HepG2 (cell line): ENCODE measurements at regions of chr19 and their contacts with region 1.

Region 1: GRCh38 chr19:49850473-49851342 is at the start of gene PTOV1:
- DNase-seq: peak; percentile 90
- ATAC-seq: peak; percentile 84
- H3K4me3 ChIP-seq: peak within 1 kb of the TSS; percentile 89 to 93 (median 90)
- H3K27ac ChIP-seq: peak within 1 kb of the TSS; percentile 100
- H3K4me1 ChIP-seq: peaks cover 30% of the 10 kb centered on the region
- H3K27me3 ChIP-seq: no peaks in the 10 kb centered on the region; a peak in 1 of 5 replicates
- CTCF ChIP-seq: peak; percentile 20; the same call in 1 of the 2 replicates
- EP300 ChIP-seq: 0 out of 4 replicates have a peak, but pooled peaks of 1 of the 2 experiments have one; percentile 35
- POLR2A ChIP-seq: peak; percentile 66 to 67; a peak in 3 of 4 replicates
- RAD21 ChIP-seq: no peak
- total RNA-seq, gene PTOV1: 59.4 and 68.5 TPM in 2 replicates

Region 2: GRCh38 chr19:49766007-49766937 is 84.4 kb before region 1 on chr19:
- CTCF ChIA-PET with region 1: no interaction called
- POLR2A ChIA-PET with region 1: interaction called, 10 read pairs
- in situ Hi-C with region 1: no loop called
- intact Hi-C with region 1: no loop called
- DNase-seq: peak; percentile 99
- ATAC-seq: peak; percentile 93
- H3K4me3 ChIP-seq: peak overlapping the region; percentile 48 to 68 (median 54)
- H3K27ac ChIP-seq: peak overlapping the region; percentile 93
- H3K4me1 ChIP-seq: peaks cover 59% of the 10 kb centered on the region
- H3K27me3 ChIP-seq: no peaks in the 10 kb centered on the region; a peak in 1 of 5 replicates
- CTCF ChIP-seq: 0 out of 2 replicates have a peak, but pooled peaks have one; percentile 2
- EP300 ChIP-seq: no peak
- POLR2A ChIP-seq: peak; percentile 68 to 89
- RAD21 ChIP-seq: no peak

Region 3: DNA sequence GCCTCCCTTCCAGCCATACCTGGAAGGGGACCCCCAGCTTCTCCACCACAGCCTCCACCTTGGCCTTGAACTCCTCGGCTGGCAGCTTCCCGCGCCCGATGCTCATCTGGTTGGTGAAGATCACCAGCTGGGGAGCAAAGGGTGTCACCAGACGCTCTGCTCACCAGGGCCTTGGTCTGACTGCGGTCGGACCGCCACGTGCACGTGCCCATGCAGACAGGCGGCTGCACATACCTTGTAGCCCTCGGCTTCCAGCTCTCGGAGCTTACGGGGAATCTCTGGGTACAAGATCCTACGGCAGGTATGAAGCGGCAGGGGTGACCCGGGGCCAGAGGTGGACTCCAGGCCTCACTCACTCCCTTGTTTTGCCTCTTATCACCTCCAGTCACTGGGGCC is 13.2 kb after region 1 on chr19:
- CTCF ChIA-PET with region 1: no interaction called
- POLR2A ChIA-PET with region 1: interaction called, 29 read pairs
- in situ Hi-C with region 1: no loop called
- intact Hi-C with region 1: no loop called
- DNase-seq: no peak
- ATAC-seq: no peak
- H3K4me3 ChIP-seq: no peak overlapping the region
- H3K27ac ChIP-seq: no peak overlapping the region
- H3K4me1 ChIP-seq: peaks cover 42% of the 10 kb centered on the region
- H3K27me3 ChIP-seq: no peaks in the 10 kb centered on the region; a peak in 1 of 5 replicates
- CTCF ChIP-seq: no peak
- EP300 ChIP-seq: no peak
- POLR2A ChIP-seq: no peak
- RAD21 ChIP-seq: no peak

Region 4: GRCh38 chr19:49869441-49870176 is 18.9 kb after region 1 on chr19:
- CTCF ChIA-PET with region 1: no interaction called
- POLR2A ChIA-PET with region 1: interaction called, 29 read pairs
- in situ Hi-C with region 1: no loop called
- intact Hi-C with region 1: no loop called
- DNase-seq: peak; percentile 99
- ATAC-seq: peak; percentile 82
- H3K4me3 ChIP-seq: peak overlapping the region; percentile 45 to 78 (median 67)
- H3K27ac ChIP-seq: peak overlapping the region; percentile 78
- H3K4me1 ChIP-seq: peaks cover 49% of the 10 kb centered on the region
- H3K27me3 ChIP-seq: no peaks in the 10 kb centered on the region; a peak in 1 of 5 replicates
- CTCF ChIP-seq: no peak
- EP300 ChIP-seq: peak in 1 of 2 experiments; percentile 91; a peak in 2 of 4 replicates
- POLR2A ChIP-seq: peak; percentile 13 to 63; a peak in 2 of 4 replicates
- RAD21 ChIP-seq: peak; percentile 58; the same call in 1 of the 2 replicates

Region 5: DNA sequence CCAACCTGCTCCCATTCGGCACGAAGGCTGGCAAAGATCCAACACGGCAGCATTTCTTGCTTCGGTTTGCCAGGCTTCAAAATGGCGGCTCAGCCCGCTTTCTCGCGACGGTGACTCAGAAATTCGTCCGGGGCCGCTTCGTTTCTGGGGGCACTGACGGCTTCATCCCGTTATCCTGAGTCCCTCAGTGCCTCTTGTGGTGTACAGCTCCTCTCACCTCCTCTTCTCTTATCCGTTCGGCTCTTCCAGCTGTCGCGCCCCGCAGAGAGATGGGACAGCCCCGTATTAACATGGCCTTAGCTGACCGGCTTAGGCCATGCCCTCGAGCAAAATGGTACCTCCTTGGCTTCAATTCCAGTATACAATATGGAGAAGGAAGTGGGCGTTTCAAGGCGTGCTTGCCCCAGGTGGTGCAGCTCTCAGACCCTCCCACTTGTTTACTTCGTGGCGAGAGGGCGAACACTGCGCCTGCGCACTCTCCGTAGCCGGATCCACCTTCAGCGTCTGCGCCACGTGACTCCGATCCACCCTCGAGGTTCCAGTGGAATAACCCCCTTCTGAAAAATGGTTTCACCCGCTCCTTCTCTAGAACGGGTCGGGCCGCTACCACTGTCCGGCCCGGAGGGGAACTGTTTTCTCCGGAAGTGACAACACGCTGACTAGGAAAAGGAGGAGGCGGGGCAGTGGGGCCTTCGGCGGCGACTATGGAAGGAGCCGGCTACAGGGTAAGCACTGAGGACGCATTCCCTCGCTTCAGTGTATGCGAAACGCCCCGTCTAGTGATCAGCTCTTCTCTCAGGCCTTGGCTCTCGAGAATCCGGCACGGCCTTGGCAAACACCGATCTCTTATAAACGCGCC is 26.5 kb after region 1 on chr19 and contains the starts of genes AKT1S1 and TBC1D17:
- CTCF ChIA-PET with region 1: no interaction called
- POLR2A ChIA-PET with region 1: interaction called, 15 read pairs
- in situ Hi-C with region 1: no loop called
- intact Hi-C with region 1: no loop called
- DNase-seq: peak; percentile 99
- ATAC-seq: peak; percentile 80
- H3K4me3 ChIP-seq: peak within 1 kb of the TSS; percentile 77 to 99 (median 97)
- H3K27ac ChIP-seq: peak within 1 kb of the TSS; percentile 99
- H3K4me1 ChIP-seq: peaks cover 31% of the 10 kb centered on the region
- H3K27me3 ChIP-seq: no peaks in the 10 kb centered on the region; a peak in 1 of 5 replicates
- CTCF ChIP-seq: no peak
- EP300 ChIP-seq: no peak; a peak in 1 of 4 replicates
- POLR2A ChIP-seq: peak; percentile 53 to 86
- RAD21 ChIP-seq: peak; percentile 20; the same call in 1 of the 2 replicates
- total RNA-seq, gene AKT1S1: 10.9 and 13.5 TPM in 2 replicates
- total RNA-seq, gene TBC1D17: 3.6 and 9.7 TPM in 2 replicates

Region 6: GRCh38 chr19:49889687-49890348 is 39.1 kb after region 1 on chr19:
- CTCF ChIA-PET with region 1: no interaction called
- POLR2A ChIA-PET with region 1: no interaction called
- in situ Hi-C with region 1: no loop called
- intact Hi-C with region 1: no loop called
- DNase-seq: no peak
- ATAC-seq: no peak
- H3K4me3 ChIP-seq: no peak overlapping the region
- H3K27ac ChIP-seq: no peak overlapping the region
- H3K4me1 ChIP-seq: no peaks in the 10 kb centered on the region
- H3K27me3 ChIP-seq: peaks cover 0 to 4% of the 10 kb centered on the region in 2 experiments; a peak in 2 of 5 replicates
- CTCF ChIP-seq: no peak
- EP300 ChIP-seq: no peak
- POLR2A ChIP-seq: no peak
- RAD21 ChIP-seq: no peak